ENCODE measurements at regions of chr16 and their contacts with region 1.

Region 1: GRCh38 chr16:87491522-87492293 is 1.1 kb downstream of the ZCCHC14 start:
- DNase-seq: peak in 6 of 10 donors; percentile 23 to 39 (median 28)
- ATAC-seq: no peak
- H3K4me3 Mint-ChIP-seq: peak overlapping the region; percentile 74 to 94 (median 87)
- H3K27ac Mint-ChIP-seq: peak overlapping the region in 9 of 10 donors; percentile 31 to 95 (median 88)
- H3K4me1 Mint-ChIP-seq: peaks cover 42 to 75% (median 64%) of the 10 kb centered on the region in 4 donors
- H3K27me3 Mint-ChIP-seq: peaks cover 0 to 2% (median 0%) of the 10 kb centered on the region in 5 donors

Region 2: GRCh38 chr16:87464691-87465300 is 26.9 kb before region 1 on chr16:
- POLR2A ChIA-PET with region 1: interaction called, 10 read pairs
- DNase-seq: no peak
- ATAC-seq: peak; percentile 49 to 63
- H3K4me3 Mint-ChIP-seq: peak overlapping the region; percentile 52 to 89 (median 76)
- H3K27ac Mint-ChIP-seq: peak overlapping the region; percentile 38 to 94 (median 88)
- H3K4me1 Mint-ChIP-seq: peaks cover 16 to 53% (median 35%) of the 10 kb centered on the region in 4 donors
- H3K27me3 Mint-ChIP-seq: no peaks in the 10 kb centered on the region

Region 3: DNA sequence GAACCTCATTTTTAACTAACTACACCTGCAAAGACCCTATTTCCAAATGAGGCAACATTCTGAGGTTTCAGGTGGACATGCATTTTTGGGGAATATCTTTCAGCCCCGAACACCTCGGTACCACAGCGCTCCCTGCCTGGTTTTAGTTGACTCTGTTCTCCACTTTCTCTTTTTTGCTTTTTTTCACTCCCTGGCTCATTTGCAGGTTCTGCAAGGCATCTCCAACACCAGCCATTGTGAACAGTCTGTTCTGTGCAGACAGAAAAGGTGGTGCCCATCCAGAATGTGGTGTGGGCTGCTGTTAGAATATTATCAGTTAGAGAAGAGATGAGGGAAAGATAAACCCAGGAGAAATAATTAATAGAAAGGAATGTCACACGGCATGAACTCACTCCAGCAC is 33.6 kb after region 1 on chr16:
- POLR2A ChIA-PET with region 1: no interaction called
- DNase-seq: no peak
- ATAC-seq: no peak
- H3K4me3 Mint-ChIP-seq: no peak overlapping the region
- H3K27ac Mint-ChIP-seq: no peak overlapping the region
- H3K4me1 Mint-ChIP-seq: no peaks in the 10 kb centered on the region
- H3K27me3 Mint-ChIP-seq: peaks cover 0 to 26% (median 7%) of the 10 kb centered on the region in 5 donors

Measured in naive thymus-derived CD8-positive, alpha-beta T cell (primary cell).